PC-9 (cell line): ENCODE measurements at regions of chr7 and their contacts with region 1.

Region 1: DNA sequence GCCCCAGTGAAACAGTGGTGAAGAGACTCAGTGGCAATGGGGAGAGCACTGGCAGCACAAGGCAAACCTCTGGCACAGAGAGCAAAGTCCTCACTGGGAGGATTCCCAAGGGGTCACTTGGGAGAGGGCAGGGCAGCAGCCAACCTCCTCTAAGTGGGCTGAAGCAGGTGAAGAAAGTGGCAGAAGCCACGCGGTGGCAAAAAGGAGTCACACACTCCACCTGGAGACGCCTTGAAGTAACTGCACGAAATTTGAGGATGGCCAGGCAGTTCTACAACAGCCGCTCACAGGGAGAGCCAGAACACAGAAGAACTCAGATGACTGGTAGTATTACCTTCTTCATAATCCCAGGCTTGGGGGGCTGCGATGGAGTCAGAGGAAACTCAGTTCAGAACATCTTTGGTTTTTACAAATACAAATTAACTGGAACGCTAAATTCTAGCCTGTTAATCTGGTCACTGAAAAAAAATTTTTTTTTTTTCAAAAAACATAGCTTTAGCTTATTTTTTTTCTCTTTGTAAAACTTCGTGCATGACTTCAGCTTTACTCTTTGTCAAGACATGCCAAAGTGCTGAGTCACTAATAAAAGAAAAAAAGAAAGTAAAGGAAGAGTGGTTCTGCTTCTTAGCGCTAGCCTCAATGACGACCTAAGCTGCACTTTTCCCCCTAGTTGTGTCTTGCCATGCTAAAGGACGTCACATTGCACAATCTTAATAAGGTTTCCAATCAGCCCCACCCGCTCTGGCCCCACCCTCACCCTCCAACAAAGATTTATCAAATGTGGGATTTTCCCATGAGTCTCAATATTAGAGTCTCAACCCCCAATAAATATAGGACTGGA is 435 bp upstream of the IL6 start:
- DNase-seq: peak; percentile 81 to 86
- H3K4me3 ChIP-seq: peak overlapping the region; percentile 45; the same call in 1 of the 2 replicates
- H3K27ac ChIP-seq: peak overlapping the region; percentile 73
- H3K4me1 ChIP-seq: peaks cover 48% of the 10 kb centered on the region
- H3K27me3 ChIP-seq: no peaks in the 10 kb centered on the region
- CTCF ChIP-seq: peak; percentile 85

Region 2: GRCh38 chr7:22577396-22578001 is 149.1 kb before region 1 on chr7:
- CTCF ChIA-PET with region 1: interaction called, 18 read pairs
- POLR2A ChIA-PET with region 1: interaction called, 6 read pairs
- intact Hi-C with region 1: loop called (anchors 1 kb)
- DNase-seq: peak; percentile 54 to 100
- H3K4me3 ChIP-seq: peak overlapping the region; percentile 19; the same call in 1 of the 2 replicates
- H3K27ac ChIP-seq: peak overlapping the region; percentile 95
- H3K4me1 ChIP-seq: peaks cover 78% of the 10 kb centered on the region
- H3K27me3 ChIP-seq: no peaks in the 10 kb centered on the region
- CTCF ChIP-seq: no peak

Region 3: DNA sequence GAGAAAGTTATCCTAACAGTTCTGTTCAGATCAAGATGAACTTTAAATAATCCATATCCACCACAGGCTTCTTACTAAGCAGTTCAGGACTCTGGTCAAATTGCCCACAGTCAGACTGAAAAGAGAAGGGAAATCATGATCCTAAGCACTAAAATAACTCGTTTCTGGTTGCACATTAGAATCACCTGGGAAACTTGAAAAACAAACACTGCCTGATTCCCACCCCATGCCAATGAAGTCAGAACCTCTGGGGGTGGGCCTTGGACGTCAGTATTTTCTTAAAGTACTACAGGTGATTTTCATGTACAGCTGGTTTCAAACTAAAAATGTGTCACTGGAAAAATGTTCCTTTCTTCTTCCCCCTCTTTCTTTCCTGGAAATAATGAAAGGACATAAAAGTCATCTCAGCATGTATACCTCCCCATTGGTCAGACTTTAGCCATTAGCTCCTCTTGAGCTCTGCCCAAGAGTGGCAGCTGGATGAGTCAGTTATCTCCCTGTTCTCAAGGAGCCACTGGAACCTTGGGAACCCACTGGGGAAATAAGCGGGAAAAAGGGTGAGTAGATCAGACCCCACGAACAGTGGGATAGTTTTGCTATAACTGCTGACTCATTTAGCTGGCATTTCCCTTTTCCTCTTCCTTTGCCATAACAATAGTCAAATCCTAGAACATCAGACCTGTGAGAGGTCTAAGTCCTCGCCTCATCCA is 74.9 kb before region 1 on chr7:
- CTCF ChIA-PET with region 1: no interaction called
- POLR2A ChIA-PET with region 1: interaction called, 3 read pairs
- intact Hi-C with region 1: loop called (anchors 5 kb)
- DNase-seq: peak in 1 of 2 experiments; percentile 23
- H3K4me3 ChIP-seq: no peak overlapping the region
- H3K27ac ChIP-seq: no peak overlapping the region
- H3K4me1 ChIP-seq: peaks cover 15% of the 10 kb centered on the region; the same call in 1 of the 2 replicates
- H3K27me3 ChIP-seq: no peaks in the 10 kb centered on the region
- CTCF ChIP-seq: no peak

Region 4: GRCh38 chr7:22702516-22702915 is 24.0 kb before region 1 on chr7:
- CTCF ChIA-PET with region 1: no interaction called
- POLR2A ChIA-PET with region 1: no interaction called
- intact Hi-C with region 1: no loop called
- DNase-seq: peak in 1 of 2 experiments; percentile 35
- H3K4me3 ChIP-seq: no peak overlapping the region
- H3K27ac ChIP-seq: no peak overlapping the region
- H3K4me1 ChIP-seq: peaks cover 9% of the 10 kb centered on the region; the same call in 1 of the 2 replicates
- H3K27me3 ChIP-seq: no peaks in the 10 kb centered on the region
- CTCF ChIP-seq: no peak

Region 5: DNA sequence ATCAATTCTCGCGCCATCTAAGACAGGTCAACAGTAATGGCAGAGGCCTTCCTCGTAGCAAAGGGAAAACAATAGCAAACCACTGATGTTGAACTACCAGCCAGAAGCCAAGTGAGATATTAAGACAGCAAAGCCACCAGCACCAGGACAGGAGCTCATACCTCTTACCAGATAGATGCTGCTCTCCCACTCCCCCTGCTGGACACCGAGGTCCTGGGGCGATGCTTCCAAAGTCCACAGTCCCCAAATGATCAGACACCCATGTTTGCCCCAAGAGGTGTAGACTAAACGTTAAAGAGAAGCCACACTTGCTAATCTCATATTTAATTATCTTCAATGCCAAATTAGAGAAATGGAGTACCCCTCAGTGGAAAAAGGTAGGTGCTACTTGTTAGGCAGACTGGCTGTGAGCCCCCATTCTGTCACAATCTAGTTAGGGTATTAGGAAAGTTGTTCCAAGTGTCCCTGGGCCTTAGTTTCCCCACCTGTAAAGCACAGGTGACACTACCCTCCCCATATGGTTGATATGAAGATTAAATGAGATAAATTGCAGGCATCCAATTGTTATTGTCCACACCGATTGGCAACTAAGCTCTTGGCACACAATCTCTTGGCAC is 56.2 kb after region 1 on chr7:
- CTCF ChIA-PET with region 1: interaction called, 12 read pairs
- POLR2A ChIA-PET with region 1: interaction called, 26 read pairs
- intact Hi-C with region 1: loop called (anchors 1 kb)
- DNase-seq: peak; percentile 54 to 70
- H3K4me3 ChIP-seq: no peak overlapping the region
- H3K27ac ChIP-seq: no peak overlapping the region
- H3K4me1 ChIP-seq: no peaks in the 10 kb centered on the region; the same call in 1 of the 2 replicates
- H3K27me3 ChIP-seq: no peaks in the 10 kb centered on the region
- CTCF ChIP-seq: peak; percentile 95

Region 6: GRCh38 chr7:22802426-22802825 is 75.9 kb after region 1 on chr7:
- CTCF ChIA-PET with region 1: no interaction called
- POLR2A ChIA-PET with region 1: no interaction called
- intact Hi-C with region 1: no loop called
- DNase-seq: no peak
- H3K4me3 ChIP-seq: no peak overlapping the region
- H3K27ac ChIP-seq: no peak overlapping the region
- H3K4me1 ChIP-seq: no peaks in the 10 kb centered on the region; the same call in 1 of the 2 replicates
- H3K27me3 ChIP-seq: no peaks in the 10 kb centered on the region
- CTCF ChIP-seq: no peak

Region 7: DNA sequence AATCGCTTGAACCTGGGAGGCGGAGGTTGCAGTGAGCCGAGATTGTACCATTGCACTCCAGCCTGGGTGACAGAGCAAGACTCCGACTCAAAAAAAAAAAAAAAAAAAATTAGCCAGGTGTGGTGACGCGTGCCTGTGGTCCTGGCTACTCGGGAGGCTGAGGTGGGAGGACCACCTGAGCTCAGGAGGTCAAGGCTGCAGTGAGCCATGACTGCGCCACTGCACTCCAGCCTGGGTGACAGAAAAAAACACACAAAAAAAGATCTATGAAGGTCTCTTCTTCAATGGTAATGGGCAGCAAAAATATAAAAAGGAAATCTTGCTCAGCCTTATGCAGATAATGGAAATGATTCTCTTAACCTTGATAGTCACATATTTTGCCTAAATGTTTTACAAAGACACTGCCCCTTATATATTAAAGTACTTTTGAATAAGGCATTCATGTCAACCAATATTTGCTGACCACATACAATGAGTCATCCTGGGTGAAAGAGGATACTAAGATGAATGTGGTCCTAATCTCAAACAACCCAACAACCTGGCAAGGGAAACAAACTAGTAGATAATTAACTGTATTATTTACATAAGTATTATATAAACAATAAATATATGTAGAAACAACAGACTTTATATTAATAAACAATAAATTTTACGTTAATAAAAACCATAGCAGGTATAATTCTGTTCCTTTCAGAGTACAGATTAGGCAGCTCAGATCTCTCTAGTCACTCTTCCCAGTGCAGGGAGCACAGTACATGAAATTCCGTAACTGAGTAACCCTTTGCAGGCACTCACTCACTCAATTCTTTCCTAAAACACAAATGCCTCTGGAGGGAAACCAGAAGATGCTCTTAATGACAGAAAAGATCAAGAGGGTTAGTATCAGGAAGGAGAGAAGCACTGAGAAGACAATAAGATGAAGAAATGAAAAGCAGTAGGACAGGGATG is 88.0 kb after region 1 on chr7:
- CTCF ChIA-PET with region 1: no interaction called
- POLR2A ChIA-PET with region 1: no interaction called
- intact Hi-C with region 1: no loop called
- DNase-seq: peak in 1 of 2 experiments; percentile 74
- H3K4me3 ChIP-seq: no peak overlapping the region
- H3K27ac ChIP-seq: no peak overlapping the region
- H3K4me1 ChIP-seq: peaks cover 13% of the 10 kb centered on the region
- H3K27me3 ChIP-seq: no peaks in the 10 kb centered on the region
- CTCF ChIP-seq: no peak

Region 8: GRCh38 chr7:22854158-22855048 is 127.8 kb after region 1 on chr7:
- CTCF ChIA-PET with region 1: no interaction called
- POLR2A ChIA-PET with region 1: no interaction called
- intact Hi-C with region 1: loop called (anchors 2 kb)
- DNase-seq: peak; percentile 66 to 88
- H3K4me3 ChIP-seq: peak overlapping the region; percentile 81
- H3K27ac ChIP-seq: peak overlapping the region; percentile 52
- H3K4me1 ChIP-seq: peaks cover 49% of the 10 kb centered on the region
- H3K27me3 ChIP-seq: no peaks in the 10 kb centered on the region
- CTCF ChIP-seq: peak; percentile 76; the same call in 1 of the 2 replicates

Region 9: GRCh38 chr7:23181684-23182553 is 455.4 kb after region 1 on chr7 and contains the start of gene NUP42:
- CTCF ChIA-PET with region 1: interaction called, 3 read pairs
- POLR2A ChIA-PET with region 1: no interaction called
- intact Hi-C with region 1: loop called (anchors 5 kb)
- DNase-seq: peak; percentile 99 to 100
- H3K4me3 ChIP-seq: peak within 1 kb of the TSS; percentile 98
- H3K27ac ChIP-seq: peak within 1 kb of the TSS; percentile 87
- H3K4me1 ChIP-seq: peaks cover 27% of the 10 kb centered on the region
- H3K27me3 ChIP-seq: no peaks in the 10 kb centered on the region
- CTCF ChIP-seq: no peak
- total RNA-seq, gene NUP42: 41.3 and 51.3 TPM in 2 replicates